ENCODE measurements at regions of chr11 and their contacts with region 1.

Region 1: GRCh38 chr11:134223836-134224709 is at the starts of genes NCAPD3 and VPS26B:
- DNase-seq: peak; percentile 99
- H3K4me3 Mint-ChIP-seq: peak within 1 kb of the TSS; percentile 97
- H3K27ac Mint-ChIP-seq: peak within 1 kb of the TSS; percentile 98
- H3K4me1 Mint-ChIP-seq: peaks cover 64% of the 10 kb centered on the region
- H3K27me3 Mint-ChIP-seq: no peaks in the 10 kb centered on the region
- total RNA-seq, gene NCAPD3: 108 and 111 TPM in 2 replicates
- total RNA-seq, gene VPS26B: 41.6 and 42.6 TPM in 2 replicates

Region 2: GRCh38 chr11:133927690-133928627 is 296.1 kb before region 1 on chr11:
- intact Hi-C with region 1: loop called (anchors 5 kb)
- DNase-seq: peak; percentile 92
- H3K4me3 Mint-ChIP-seq: peak overlapping the region; percentile 89
- H3K27ac Mint-ChIP-seq: peak overlapping the region; percentile 97
- H3K4me1 Mint-ChIP-seq: peaks cover 34% of the 10 kb centered on the region
- H3K27me3 Mint-ChIP-seq: no peaks in the 10 kb centered on the region

Region 3: DNA sequence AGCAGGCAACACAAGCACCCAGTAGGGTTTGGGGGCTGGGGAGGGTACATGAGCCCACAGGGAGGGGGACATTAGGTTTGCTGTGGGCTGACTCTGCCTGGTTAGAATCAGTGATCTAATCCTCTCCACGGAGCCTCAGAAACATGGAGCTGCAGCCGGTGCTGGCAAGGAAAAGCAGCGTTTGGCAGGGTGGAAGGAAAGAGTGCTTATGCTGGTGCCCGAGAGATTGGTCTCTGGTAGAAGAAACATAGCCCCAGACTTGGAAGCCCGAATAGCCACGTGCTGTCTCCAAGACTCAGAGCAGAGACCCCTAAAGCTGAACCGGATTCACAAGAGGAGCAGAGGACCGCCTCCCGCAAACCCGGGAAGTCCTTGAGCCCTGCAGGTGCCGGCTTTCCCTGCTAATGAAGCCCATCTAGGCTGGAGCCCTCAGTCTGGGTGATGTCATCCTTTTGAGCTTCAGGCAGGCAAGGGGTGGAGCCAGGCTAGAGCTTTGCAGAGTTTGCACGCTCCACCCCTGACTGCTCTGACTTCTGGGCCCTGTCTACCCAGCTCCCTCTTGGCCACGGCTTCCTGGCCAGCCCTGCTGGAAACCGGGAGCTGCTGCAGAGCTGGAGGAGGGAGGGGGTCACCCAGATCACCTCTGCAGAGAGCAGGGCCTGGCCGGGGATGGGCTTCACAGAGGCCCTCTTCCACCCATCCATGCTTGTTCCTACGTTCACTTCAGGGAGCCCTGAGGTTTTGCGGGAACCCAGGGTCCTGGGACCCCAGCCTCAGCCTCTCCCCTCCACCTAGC is 190.2 kb before region 1 on chr11:
- intact Hi-C with region 1: loop called (anchors 1 kb)
- DNase-seq: peak; percentile 92
- H3K4me3 Mint-ChIP-seq: peak overlapping the region; percentile 54
- H3K27ac Mint-ChIP-seq: peak overlapping the region; percentile 73
- H3K4me1 Mint-ChIP-seq: peaks cover 48% of the 10 kb centered on the region
- H3K27me3 Mint-ChIP-seq: peaks cover 7% of the 10 kb centered on the region

Region 4: GRCh38 chr11:134253188-134253993 is 29.3 kb after region 1 on chr11 and contains the starts of genes ACAD8 and THYN1:
- intact Hi-C with region 1: loop called (anchors 1 kb)
- DNase-seq: peak; percentile 98
- H3K4me3 Mint-ChIP-seq: peak within 1 kb of the TSS; percentile 94
- H3K27ac Mint-ChIP-seq: peak within 1 kb of the TSS; percentile 88
- H3K4me1 Mint-ChIP-seq: peaks cover 29% of the 10 kb centered on the region
- H3K27me3 Mint-ChIP-seq: no peaks in the 10 kb centered on the region
- total RNA-seq, gene ACAD8: 26.0 and 26.7 TPM in 2 replicates
- total RNA-seq, gene THYN1: 61.6 and 69.1 TPM in 2 replicates

Region 5: DNA sequence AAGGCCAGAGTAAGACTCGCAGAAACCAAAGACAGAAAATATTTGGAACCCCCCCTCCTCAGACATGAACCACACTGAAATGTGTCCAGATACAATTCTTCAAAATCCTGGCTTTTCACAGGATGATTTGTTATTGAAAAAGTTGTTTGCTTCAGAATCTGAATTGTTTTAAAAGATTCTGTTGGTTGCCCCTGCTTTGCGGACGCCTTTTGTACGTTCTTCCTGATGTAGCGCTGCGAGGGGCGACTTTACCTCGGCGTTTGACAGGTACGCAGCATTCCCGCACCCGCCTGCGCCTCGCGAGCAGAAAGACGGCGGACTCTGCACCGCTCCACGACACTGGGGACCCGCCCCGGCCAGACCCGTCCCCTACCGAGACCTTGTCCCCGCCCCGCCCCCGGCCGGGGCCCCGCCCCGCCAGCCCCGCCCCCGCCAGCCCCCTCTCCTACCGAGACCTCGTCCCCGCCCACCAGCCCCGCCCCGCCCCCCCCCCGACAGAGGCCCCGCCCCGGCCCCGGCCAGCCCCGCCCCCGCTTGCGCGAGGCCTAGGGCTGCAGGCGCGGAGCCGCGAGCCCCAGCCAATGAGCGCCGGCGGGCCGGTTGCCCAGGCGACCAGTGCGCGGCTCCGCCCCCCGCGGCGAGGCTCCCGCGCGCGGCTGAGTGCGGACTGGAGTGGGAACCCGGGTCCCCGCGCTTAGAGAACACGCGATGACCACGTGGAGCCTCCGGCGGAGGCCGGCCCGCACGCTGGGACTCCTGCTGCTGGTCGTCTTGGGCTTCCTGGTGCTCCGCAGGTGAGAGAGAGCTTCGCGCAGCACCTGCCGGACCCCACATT is 107.5 kb after region 1 on chr11 and contains the start of gene GLB1L2:
- intact Hi-C with region 1: loop called (anchors 1 kb)
- DNase-seq: peak; percentile 96
- H3K4me3 Mint-ChIP-seq: peak within 1 kb of the TSS; percentile 86
- H3K27ac Mint-ChIP-seq: peak within 1 kb of the TSS; percentile 48
- H3K4me1 Mint-ChIP-seq: peaks cover 14% of the 10 kb centered on the region
- H3K27me3 Mint-ChIP-seq: peaks cover 51% of the 10 kb centered on the region
- total RNA-seq, gene GLB1L2: 10.2 and 11.2 TPM in 2 replicates

Measured in activated CD4-positive, alpha-beta T cell treated with anti-CD3 and anti-CD28 coated beads, Interleukin-2, amount 10 ng/mL, durations not matched to agents 24 days and 14 days (primary cell).